ENCODE measurements at regions of chr10 and their contacts with region 1.

Region 1: DNA sequence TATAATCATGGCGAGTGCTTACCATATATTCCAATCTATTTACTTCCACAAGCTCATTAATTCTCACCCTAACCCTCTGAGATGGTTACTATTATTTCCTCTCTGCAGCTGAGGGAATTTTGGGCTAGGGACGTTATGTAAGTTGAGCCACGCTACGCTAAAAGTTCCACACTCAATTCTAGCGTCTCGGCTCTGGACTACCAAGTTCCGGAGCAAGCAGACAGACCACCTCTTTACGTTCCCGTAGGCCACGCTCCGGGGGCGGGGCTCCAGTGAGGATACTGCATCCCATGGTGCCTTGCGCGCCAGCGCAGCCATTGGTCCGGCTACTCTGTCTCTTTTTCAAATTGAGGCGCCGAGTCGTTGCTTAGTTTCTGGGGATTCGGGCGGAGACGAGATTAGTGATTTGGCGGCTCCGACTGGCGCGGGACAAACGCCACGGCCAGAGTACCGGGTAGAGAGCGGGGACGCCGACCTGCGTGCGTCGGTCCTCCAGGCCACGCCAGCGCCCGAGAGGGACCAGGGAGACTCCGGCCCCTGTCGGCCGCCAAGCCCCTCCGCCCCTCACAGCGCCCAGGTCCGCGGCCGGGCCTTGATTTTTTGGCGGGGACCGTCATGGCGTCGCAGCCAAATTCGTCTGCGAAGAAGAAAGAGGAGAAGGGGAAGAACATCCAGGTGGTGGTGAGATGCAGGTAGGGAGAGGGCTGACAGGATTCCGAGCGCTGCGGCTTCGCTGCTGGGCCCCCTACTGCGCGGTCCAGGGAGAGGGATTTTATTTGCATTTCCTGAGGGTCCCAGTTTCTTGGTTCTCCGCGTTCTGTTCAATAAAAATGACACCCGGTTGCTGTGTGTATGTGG is at the start of gene KIF11:
- DNase-seq: peak; percentile 80 to 97 (median 86)
- ATAC-seq: peak; percentile 80
- H3K4me3 ChIP-seq: peak within 1 kb of the TSS; percentile 64
- H3K27ac ChIP-seq: peak within 1 kb of the TSS; percentile 89
- H3K4me1 ChIP-seq: peaks cover 10 to 18% of the 10 kb centered on the region in 2 experiments; a peak in 4 of 5 replicates
- H3K27me3 ChIP-seq: no peaks in the 10 kb centered on the region
- CTCF ChIP-seq: peak in 1 of 3 experiments; percentile 16; a peak in 1 of 6 replicates
- EP300 ChIP-seq: peak; percentile 8; the same call in 1 of the 2 replicates
- POLR2A ChIP-seq: peak; percentile 95
- RAD21 ChIP-seq: no peak
- polyA plus RNA-seq, gene KIF11: 11.3 to 12.3 TPM

Region 2: DNA sequence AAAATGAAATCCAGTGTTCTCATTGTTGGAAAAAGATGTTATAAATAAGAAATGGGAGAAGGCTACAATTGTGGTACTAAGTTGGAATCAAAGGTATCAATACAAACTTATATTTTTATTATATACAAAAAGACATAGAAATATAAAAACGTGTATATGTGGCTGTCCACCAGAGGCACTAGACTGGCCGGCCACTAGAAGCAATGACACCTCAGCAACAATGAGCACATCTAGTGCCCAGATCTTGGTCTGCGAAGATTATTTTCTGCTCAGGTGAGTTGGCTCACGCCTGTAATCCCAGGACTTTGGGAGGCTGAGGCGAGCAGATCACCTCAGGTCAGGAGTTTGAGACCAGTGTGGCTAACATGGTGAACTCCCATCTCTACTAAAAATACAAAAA is 40.7 kb before region 1 on chr10:
- CTCF ChIA-PET with region 1: no interaction called
- POLR2A ChIA-PET with region 1: no interaction called
- in situ Hi-C with region 1: no loop called
- intact Hi-C with region 1: no loop called
- DNase-seq: no peak
- ATAC-seq: no peak
- H3K4me3 ChIP-seq: no peak overlapping the region
- H3K27ac ChIP-seq: no peak overlapping the region
- H3K4me1 ChIP-seq: no peaks in the 10 kb centered on the region
- H3K27me3 ChIP-seq: no peaks in the 10 kb centered on the region
- CTCF ChIP-seq: peak in 2 of 3 experiments; percentile 24 to 26; a peak in 2 of 6 replicates
- EP300 ChIP-seq: no peak
- POLR2A ChIP-seq: no peak
- RAD21 ChIP-seq: no peak

Region 3: GRCh38 chr10:92562424-92562823 is 30.6 kb before region 1 on chr10:
- CTCF ChIA-PET with region 1: no interaction called
- POLR2A ChIA-PET with region 1: no interaction called
- in situ Hi-C with region 1: no loop called
- intact Hi-C with region 1: no loop called
- DNase-seq: peak in 2 of 4 experiments; percentile 16
- ATAC-seq: no peak
- H3K4me3 ChIP-seq: no peak overlapping the region
- H3K27ac ChIP-seq: no peak overlapping the region
- H3K4me1 ChIP-seq: no peaks in the 10 kb centered on the region; a peak in 1 of 5 replicates
- H3K27me3 ChIP-seq: no peaks in the 10 kb centered on the region
- CTCF ChIP-seq: no peak
- EP300 ChIP-seq: no peak
- POLR2A ChIP-seq: no peak
- RAD21 ChIP-seq: no peak

Region 4: GRCh38 chr10:92573798-92574547 is 19.0 kb before region 1 on chr10 and contains the start of gene IDE:
- CTCF ChIA-PET with region 1: no interaction called
- POLR2A ChIA-PET with region 1: interaction called, 14 read pairs
- in situ Hi-C with region 1: no loop called
- intact Hi-C with region 1: no loop called
- DNase-seq: peak; percentile 78 to 88 (median 83)
- ATAC-seq: peak; percentile 87
- H3K4me3 ChIP-seq: peak within 1 kb of the TSS; percentile 87
- H3K27ac ChIP-seq: peak within 1 kb of the TSS; percentile 97
- H3K4me1 ChIP-seq: peaks cover 9 to 14% of the 10 kb centered on the region in 2 experiments; a peak in 4 of 5 replicates
- H3K27me3 ChIP-seq: no peaks in the 10 kb centered on the region
- CTCF ChIP-seq: peak; percentile 84 to 91 (median 84)
- EP300 ChIP-seq: 0 out of 2 replicates have a peak, but pooled peaks have one; percentile 1
- POLR2A ChIP-seq: peak; percentile 90
- RAD21 ChIP-seq: peak; percentile 72 to 79
- polyA plus RNA-seq, gene IDE: 10.2 to 19.5 TPM

Region 5: DNA sequence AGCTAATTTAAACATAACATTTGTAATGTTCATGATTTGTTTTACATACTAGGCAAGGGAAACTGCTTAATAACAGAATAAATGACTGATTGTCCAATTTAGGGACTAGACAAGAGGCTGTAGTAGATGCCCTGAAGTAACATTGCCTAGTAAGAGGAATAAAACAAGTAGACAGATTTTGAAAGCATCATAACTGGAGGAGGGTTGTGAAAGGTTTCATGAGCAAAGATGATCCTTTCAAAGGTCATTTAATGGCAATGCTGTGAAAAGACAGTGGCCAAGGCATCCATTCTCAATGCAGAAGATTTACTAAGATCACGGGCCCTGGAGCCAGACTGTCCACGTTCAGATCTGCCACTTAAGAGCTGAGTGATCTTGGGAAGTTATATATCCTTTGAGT is 51.9 kb after region 1 on chr10:
- CTCF ChIA-PET with region 1: no interaction called
- POLR2A ChIA-PET with region 1: no interaction called
- in situ Hi-C with region 1: no loop called
- intact Hi-C with region 1: loop called (anchors 2 kb)
- DNase-seq: no peak
- ATAC-seq: no peak
- H3K4me3 ChIP-seq: no peak overlapping the region
- H3K27ac ChIP-seq: no peak overlapping the region
- H3K4me1 ChIP-seq: peaks cover 0 to 6% of the 10 kb centered on the region in 2 experiments; a peak in 2 of 5 replicates
- H3K27me3 ChIP-seq: no peaks in the 10 kb centered on the region
- CTCF ChIP-seq: no peak
- EP300 ChIP-seq: no peak
- POLR2A ChIP-seq: no peak
- RAD21 ChIP-seq: no peak

Region 6: GRCh38 chr10:92699518-92700381 is 106.8 kb after region 1 on chr10:
- CTCF ChIA-PET with region 1: no interaction called
- POLR2A ChIA-PET with region 1: no interaction called
- in situ Hi-C with region 1: no loop called
- intact Hi-C with region 1: loop called (anchors 2 kb)
- DNase-seq: peak in 2 of 4 experiments; percentile 49 to 78
- ATAC-seq: peak; percentile 50
- H3K4me3 ChIP-seq: peak overlapping the region; percentile 37
- H3K27ac ChIP-seq: peak overlapping the region; percentile 87
- H3K4me1 ChIP-seq: peaks cover 19 to 31% of the 10 kb centered on the region in 2 experiments; a peak in 4 of 5 replicates
- H3K27me3 ChIP-seq: no peaks in the 10 kb centered on the region
- CTCF ChIP-seq: no peak
- EP300 ChIP-seq: no peak
- POLR2A ChIP-seq: peak; percentile 64
- RAD21 ChIP-seq: no peak

Region 7: DNA sequence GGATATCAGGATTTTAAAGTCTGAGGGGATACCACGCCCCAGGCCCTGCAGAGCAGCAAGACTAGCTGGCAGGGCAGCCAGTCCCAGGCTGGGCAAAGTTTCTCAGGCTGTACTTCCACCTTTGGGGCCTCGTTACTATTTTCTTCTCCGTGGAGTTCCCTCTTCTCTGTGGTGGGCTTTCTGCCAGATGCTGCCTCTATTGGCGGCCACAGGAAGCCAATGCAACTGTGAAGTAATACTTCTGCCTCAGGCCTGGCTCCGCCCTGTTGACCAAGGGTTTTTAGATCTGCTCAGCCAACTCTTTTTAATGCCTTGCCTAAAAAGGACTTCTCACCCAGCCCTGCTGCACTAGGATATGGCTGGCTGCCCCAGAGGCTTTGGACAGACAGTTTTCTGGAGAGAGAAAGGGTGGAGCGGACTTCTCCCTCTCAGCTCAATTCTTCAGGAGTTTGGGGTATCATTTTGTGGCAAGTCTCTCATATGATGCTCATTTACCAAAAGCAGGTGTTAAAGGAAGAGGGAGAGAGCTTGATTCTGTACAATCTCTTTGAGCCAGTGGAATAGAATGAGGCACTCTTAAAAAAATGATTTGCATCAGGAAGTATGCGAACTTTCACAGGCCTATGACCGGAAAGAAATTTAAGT is 164.2 kb after region 1 on chr10:
- CTCF ChIA-PET with region 1: no interaction called
- POLR2A ChIA-PET with region 1: interaction called, 3 read pairs
- in situ Hi-C with region 1: no loop called
- intact Hi-C with region 1: loop called (anchors 1 kb)
- DNase-seq: peak; percentile 38 to 90 (median 58)
- ATAC-seq: peak; percentile 81
- H3K4me3 ChIP-seq: peak overlapping the region; percentile 18
- H3K27ac ChIP-seq: peak overlapping the region; percentile 97
- H3K4me1 ChIP-seq: peaks cover 15 to 62% of the 10 kb centered on the region in 2 experiments
- H3K27me3 ChIP-seq: no peaks in the 10 kb centered on the region
- CTCF ChIP-seq: peak; percentile 41 to 50 (median 46); a peak in 5 of 6 replicates
- EP300 ChIP-seq: peak; percentile 70
- POLR2A ChIP-seq: 0 out of 2 replicates have a peak, but pooled peaks have one; percentile 52
- RAD21 ChIP-seq: peak; percentile 13 to 28; a peak in 1 of 4 replicates

Region 8: DNA sequence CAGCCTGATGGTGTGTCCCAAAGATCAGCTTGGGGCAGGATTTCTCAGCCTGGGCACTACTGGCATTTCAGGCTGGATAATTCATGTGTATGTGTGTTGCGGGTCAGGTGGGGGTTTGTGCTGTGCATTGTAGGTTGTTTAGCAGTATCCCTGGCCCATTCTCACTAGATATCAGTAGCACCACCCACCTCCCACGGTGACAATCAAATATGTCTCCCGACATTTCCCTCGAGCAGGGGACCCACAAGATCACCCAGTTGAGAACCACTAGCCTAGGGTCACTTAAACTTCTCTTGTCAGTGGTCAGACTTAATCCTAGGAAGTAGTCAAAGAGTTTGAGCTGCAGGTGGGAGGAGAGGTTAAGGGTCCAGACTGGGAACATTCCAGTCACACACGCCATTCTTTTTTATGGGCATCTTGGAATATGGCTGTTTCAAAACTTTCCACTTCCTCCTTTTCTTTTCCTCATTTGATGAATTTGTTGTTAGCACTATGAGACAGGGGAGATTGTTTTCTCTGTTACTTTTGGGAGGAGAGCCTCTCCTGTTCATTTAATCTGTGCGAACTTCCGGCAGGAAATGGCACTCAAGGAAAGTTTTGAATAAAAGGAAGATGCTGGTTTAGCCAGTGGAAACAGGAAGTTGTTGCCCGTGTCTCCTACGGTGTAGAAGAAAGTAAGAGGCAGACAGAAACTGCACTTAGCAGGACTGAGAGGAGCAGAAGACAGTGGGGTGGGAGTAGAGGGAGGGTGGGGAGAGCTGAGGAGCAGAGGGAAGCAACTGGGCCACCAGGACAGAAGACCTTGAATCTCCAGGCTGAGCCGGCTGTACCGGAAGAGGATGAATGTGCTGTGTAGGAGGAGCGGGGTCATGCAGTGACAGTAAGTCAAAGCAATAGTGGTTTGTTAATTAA is 237.7 kb after region 1 on chr10:
- CTCF ChIA-PET with region 1: no interaction called
- POLR2A ChIA-PET with region 1: interaction called, 3 read pairs
- in situ Hi-C with region 1: no loop called
- intact Hi-C with region 1: loop called (anchors 5 kb)
- DNase-seq: peak; percentile 26 to 77 (median 37)
- ATAC-seq: peak; percentile 69
- H3K4me3 ChIP-seq: peak overlapping the region; percentile 40
- H3K27ac ChIP-seq: peak overlapping the region; percentile 96
- H3K4me1 ChIP-seq: peaks cover 7 to 18% of the 10 kb centered on the region in 2 experiments; a peak in 4 of 5 replicates
- H3K27me3 ChIP-seq: no peaks in the 10 kb centered on the region
- CTCF ChIP-seq: no peak
- EP300 ChIP-seq: no peak
- POLR2A ChIP-seq: peak; percentile 64
- RAD21 ChIP-seq: no peak

Region 9: GRCh38 chr10:92914478-92915325 is 321.7 kb after region 1 on chr10:
- CTCF ChIA-PET with region 1: no interaction called
- POLR2A ChIA-PET with region 1: no interaction called
- in situ Hi-C with region 1: no loop called
- intact Hi-C with region 1: no loop called
- DNase-seq: peak; percentile 36 to 75 (median 44)
- ATAC-seq: peak; percentile 97
- H3K4me3 ChIP-seq: no peak overlapping the region
- H3K27ac ChIP-seq: no peak overlapping the region; the same call in 2 of the 3 replicates
- H3K4me1 ChIP-seq: peaks cover 0 to 13% of the 10 kb centered on the region in 2 experiments; a peak in 3 of 5 replicates
- H3K27me3 ChIP-seq: no peaks in the 10 kb centered on the region
- CTCF ChIP-seq: peak; percentile 37 to 63 (median 55); a peak in 5 of 6 replicates
- EP300 ChIP-seq: no peak
- POLR2A ChIP-seq: no peak
- RAD21 ChIP-seq: peak in 1 of 2 experiments; percentile 27; a peak in 2 of 4 replicates

Region 10: GRCh38 chr10:93039721-93040120 is 446.7 kb after region 1 on chr10:
- CTCF ChIA-PET with region 1: no interaction called
- POLR2A ChIA-PET with region 1: no interaction called
- in situ Hi-C with region 1: no loop called
- intact Hi-C with region 1: no loop called
- DNase-seq: peak in 2 of 4 experiments; percentile 18 to 47
- ATAC-seq: peak; percentile 87
- H3K4me3 ChIP-seq: no peak overlapping the region
- H3K27ac ChIP-seq: no peak overlapping the region
- H3K4me1 ChIP-seq: no peaks in the 10 kb centered on the region; a peak in 2 of 5 replicates
- H3K27me3 ChIP-seq: no peaks in the 10 kb centered on the region
- CTCF ChIP-seq: peak; percentile 53 to 67 (median 67)
- EP300 ChIP-seq: no peak
- POLR2A ChIP-seq: no peak
- RAD21 ChIP-seq: peak; percentile 9 to 76; a peak in 2 of 4 replicates

Region 11: GRCh38 chr10:93074147-93074596 is 481.2 kb after region 1 on chr10:
- CTCF ChIA-PET with region 1: no interaction called
- POLR2A ChIA-PET with region 1: no interaction called
- in situ Hi-C with region 1: no loop called
- intact Hi-C with region 1: loop called (anchors 10 kb)
- DNase-seq: peak in 2 of 4 experiments; percentile 33 to 42
- ATAC-seq: no peak
- H3K4me3 ChIP-seq: no peak overlapping the region
- H3K27ac ChIP-seq: no peak overlapping the region
- H3K4me1 ChIP-seq: peaks cover 33 to 56% of the 10 kb centered on the region in 2 experiments; a peak in 4 of 5 replicates
- H3K27me3 ChIP-seq: no peaks in the 10 kb centered on the region
- CTCF ChIP-seq: peak in 1 of 3 experiments; percentile 34; a peak in 2 of 6 replicates
- EP300 ChIP-seq: no peak
- POLR2A ChIP-seq: no peak
- RAD21 ChIP-seq: no peak